ENCODE measurements at regions of chr7 and their contacts with region 1.

Region 1: DNA sequence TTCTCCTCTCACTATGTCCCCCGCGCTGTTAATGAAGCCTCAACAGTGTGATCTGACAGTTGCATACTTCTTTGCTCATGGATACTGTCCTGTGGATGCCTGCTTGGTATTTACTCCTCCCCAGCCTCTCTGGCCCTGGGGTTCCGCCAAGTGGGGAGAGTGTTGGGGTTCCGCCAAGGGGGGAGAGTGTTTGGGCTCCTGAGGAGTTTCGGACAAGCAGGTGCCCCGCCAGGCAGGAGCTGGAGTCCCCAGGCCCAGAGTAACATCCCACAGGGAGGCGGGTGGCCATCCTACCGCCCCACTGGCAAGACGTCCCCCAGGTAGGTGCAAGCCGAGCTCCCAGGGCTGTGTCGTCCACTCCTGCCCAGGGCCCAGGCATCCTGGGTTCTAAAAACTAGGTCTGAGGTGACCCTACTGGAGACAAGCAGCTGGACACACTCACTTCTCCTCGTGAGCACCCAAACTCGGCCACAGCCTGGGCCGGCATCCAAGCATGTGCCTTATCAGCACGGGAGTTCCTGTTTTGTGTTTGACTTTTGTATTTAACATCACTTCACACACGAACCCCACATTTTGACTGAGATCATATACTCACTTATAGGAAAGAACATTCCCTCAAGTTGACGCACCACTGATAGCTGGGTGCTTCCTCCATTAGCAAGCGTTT is 34.2 kb downstream of the CAMK2B start:
- DNase-seq: no peak
- H3K4me3 Mint-ChIP-seq: no peak overlapping the region
- H3K27ac Mint-ChIP-seq: no peak overlapping the region
- H3K4me1 Mint-ChIP-seq: no peaks in the 10 kb centered on the region
- H3K27me3 Mint-ChIP-seq: peaks cover 7% of the 10 kb centered on the region
- CTCF ChIP-seq: no peak

Region 2: DNA sequence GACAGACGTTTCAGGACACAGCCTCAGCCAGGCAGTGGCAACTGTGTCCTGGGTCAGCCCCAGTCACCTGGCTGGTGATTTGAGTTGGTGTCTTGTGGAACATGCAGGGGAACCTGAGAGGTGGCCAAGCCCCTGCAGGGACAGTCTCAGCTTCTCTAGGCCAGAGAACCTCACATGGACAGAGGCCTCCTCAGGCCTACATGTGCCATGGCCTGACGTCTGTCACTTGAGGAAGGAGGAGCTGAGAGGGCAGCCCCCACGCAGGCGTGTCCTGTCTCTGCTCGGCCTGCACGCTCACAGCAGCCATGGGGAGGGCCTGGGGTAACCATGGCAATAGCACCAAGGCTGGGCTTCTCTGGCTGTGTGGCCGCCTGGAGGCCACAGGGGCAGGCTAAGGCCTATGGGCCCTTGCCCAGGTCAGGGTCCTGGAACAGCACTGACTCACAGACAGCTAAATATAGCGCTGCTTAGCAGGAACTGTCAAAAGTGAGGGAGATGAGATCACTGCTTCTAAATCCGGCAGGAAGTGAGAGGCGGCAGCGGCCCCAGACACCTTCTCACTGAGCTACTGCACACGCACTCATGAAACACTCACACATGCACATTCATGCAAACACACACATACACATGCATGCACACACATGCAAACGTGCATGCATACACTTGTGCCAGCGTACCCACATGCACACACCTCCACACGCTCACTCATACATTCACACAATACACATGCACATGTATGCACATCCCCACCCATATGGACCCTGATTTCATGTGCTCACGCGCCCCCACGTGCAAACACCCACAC is 33.4 kb before region 1 on chr7:
- CTCF ChIA-PET with region 1: no interaction called
- POLR2A ChIA-PET with region 1: no interaction called
- intact Hi-C with region 1: loop called (anchors 5 kb)
- DNase-seq: peak; percentile 91
- H3K4me3 Mint-ChIP-seq: no peak overlapping the region
- H3K27ac Mint-ChIP-seq: no peak overlapping the region
- H3K4me1 Mint-ChIP-seq: peaks cover 29% of the 10 kb centered on the region
- H3K27me3 Mint-ChIP-seq: no peaks in the 10 kb centered on the region
- CTCF ChIP-seq: no peak

Region 3: DNA sequence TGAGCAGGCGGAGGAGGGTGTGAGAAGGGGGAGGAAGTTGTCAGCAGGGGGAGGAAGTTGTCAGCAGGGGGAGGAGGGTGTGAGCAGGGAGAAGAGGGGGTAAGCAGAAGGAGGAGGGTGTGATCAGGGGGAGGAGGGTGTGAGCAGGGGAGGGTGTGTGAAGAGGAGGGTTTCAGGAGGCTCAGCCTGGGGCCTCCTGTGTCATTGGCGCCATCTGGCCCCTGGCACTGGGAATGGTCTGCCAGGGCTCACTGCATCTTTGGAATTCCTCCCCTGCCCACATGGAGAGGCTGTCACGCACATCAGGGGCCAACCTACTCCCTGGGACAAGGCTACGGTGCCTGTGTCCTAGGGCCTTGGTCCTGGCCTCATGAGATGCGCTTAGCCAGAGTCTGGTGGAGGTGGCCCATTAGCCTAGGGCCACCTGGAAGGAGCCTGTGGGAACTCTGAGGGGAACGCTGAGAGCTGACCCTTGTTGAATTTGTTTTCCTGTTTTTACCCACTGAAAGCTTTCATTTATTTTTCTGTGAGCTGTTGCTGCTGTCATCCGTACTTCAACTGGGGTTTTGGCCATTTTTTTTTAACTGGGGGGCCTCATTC is 16.2 kb after region 1 on chr7:
- CTCF ChIA-PET with region 1: no interaction called
- POLR2A ChIA-PET with region 1: no interaction called
- intact Hi-C with region 1: no loop called
- DNase-seq: peak; percentile 76
- H3K4me3 Mint-ChIP-seq: no peak overlapping the region
- H3K27ac Mint-ChIP-seq: peak overlapping the region; percentile 64
- H3K4me1 Mint-ChIP-seq: peaks cover 10% of the 10 kb centered on the region
- H3K27me3 Mint-ChIP-seq: no peaks in the 10 kb centered on the region
- CTCF ChIP-seq: peak; percentile 29